ENCODE measurements at regions of chr11 and their contacts with region 1.

Region 1: GRCh38 chr11:1832211-1832919 is 2.4 kb upstream of the SYT8 start:
- DNase-seq: peak in 2 of 3 donors; percentile 65 to 72
- ATAC-seq: peak; percentile 58 to 73 (median 66)
- H3K4me3 ChIP-seq: peak overlapping the region in 2 of 3 donors; percentile 19 to 31
- H3K27ac ChIP-seq: no peak overlapping the region
- H3K4me1 ChIP-seq: peaks cover 0 to 20% (median 7%) of the 10 kb centered on the region in 4 donors
- H3K27me3 ChIP-seq: no peaks in the 10 kb centered on the region
- CTCF ChIP-seq: peak; percentile 97 to 98 (median 98)
- POLR2A ChIP-seq: no peak

Region 2: GRCh38 chr11:1652771-1653540 is 179.4 kb before region 1 on chr11:
- intact Hi-C with region 1: loop called (anchors 5 kb)
- DNase-seq: peak; percentile 82 to 85 (median 83)
- ATAC-seq: peak; percentile 68 to 86 (median 76)
- H3K4me3 ChIP-seq: peak overlapping the region in 1 of 3 donors; percentile 13
- H3K27ac ChIP-seq: peak overlapping the region; percentile 47 to 88 (median 49)
- H3K4me1 ChIP-seq: peaks cover 0 to 38% (median 22%) of the 10 kb centered on the region in 4 donors
- H3K27me3 ChIP-seq: no peaks in the 10 kb centered on the region
- CTCF ChIP-seq: peak; percentile 94 to 99 (median 98)
- POLR2A ChIP-seq: no peak

Region 3: GRCh38 chr11:1706634-1707400 is 125.5 kb before region 1 on chr11:
- intact Hi-C with region 1: no loop called
- DNase-seq: peak in 1 of 3 donors; percentile 50
- ATAC-seq: peak; percentile 58 to 81 (median 74)
- H3K4me3 ChIP-seq: no peak overlapping the region
- H3K27ac ChIP-seq: no peak overlapping the region
- H3K4me1 ChIP-seq: no peaks in the 10 kb centered on the region
- H3K27me3 ChIP-seq: no peaks in the 10 kb centered on the region
- CTCF ChIP-seq: peak; percentile 17 to 30 (median 25)
- POLR2A ChIP-seq: no peak

Measured in right lobe of liver (tissue), 6 donors.